Endothelial cell of umbilical vein (primary cell): ENCODE measurements at regions of chr5 and their contacts with region 1.

Region 1: DNA sequence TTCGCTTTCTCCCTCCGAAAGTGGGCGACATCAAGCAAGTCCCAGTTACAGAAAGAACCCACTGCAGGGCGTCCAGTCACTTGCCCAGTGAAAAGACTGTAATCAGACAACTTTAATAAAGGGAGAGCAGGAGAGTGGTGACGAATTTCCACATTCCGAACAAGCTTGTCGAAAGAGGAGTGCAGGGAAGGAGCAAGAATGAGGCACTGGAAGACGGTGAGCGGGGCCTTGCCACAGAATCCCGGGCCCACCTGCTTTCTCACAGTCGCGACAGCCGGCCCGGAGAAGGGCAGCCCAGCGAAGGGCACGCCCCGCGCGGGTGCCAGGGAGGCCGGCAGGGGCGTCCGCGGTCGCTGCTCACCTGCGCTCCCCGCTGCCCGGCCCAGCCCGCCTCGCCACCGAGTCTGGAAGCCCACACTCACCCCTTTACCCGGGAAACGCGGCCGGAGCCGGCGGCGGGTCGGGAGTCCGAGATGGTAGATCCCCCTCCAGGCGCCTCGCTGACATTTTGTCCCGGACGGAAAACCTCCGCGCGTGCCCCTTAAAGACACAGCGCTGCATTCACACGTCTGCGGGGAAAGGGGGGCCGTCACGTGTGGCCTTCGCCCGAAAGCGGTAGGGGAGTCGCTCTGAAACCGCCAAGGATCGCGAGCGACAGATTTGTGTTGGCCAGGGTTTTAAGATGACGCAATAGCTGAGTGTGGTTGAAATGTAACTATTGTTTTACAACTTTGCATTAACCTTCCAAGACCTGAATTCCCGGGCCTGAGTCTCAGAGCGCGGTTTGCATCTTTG is at the start of gene ZBED3:
- DNase-seq: peak; percentile 83
- H3K4me3 ChIP-seq: peak within 1 kb of the TSS; percentile 58 to 86 (median 76)
- H3K27ac ChIP-seq: peak within 1 kb of the TSS; percentile 82
- H3K4me1 ChIP-seq: peaks cover 16% of the 10 kb centered on the region
- H3K27me3 ChIP-seq: no peaks in the 10 kb centered on the region
- CTCF ChIP-seq: peak in 1 of 2 donors; percentile 16
- POLR2A ChIP-seq: peak; percentile 43
- total RNA-seq, gene ZBED3: 11.8 and 16.0 TPM in 2 replicates

Region 2: DNA sequence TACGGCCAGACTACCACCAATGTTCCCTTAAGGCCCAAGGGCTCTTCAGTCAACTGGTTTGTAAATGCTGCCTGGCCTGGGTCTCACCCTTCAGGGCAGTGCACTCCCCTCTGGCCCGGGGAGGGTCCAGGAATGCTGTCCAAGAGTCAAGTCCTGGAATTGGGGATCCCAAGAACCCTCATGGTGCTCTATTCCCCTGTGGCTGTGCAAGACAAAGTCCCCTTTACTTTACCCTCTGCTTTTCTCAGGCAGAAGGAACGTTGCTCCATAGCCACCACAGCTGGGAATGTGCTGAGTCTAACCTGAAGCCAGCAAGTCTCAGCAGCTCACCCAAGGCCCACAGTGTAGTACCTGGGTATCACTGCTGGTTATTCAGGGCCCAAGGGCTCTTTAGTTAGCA is 185.4 kb before region 1 on chr5:
- CTCF ChIA-PET with region 1: no interaction called
- POLR2A ChIA-PET with region 1: no interaction called
- dilution Hi-C with region 1: no loop called
- intact Hi-C with region 1: no loop called
- DNase-seq: no peak
- H3K4me3 ChIP-seq: no peak overlapping the region
- H3K27ac ChIP-seq: no peak overlapping the region
- H3K4me1 ChIP-seq: no peaks in the 10 kb centered on the region
- H3K27me3 ChIP-seq: no peaks in the 10 kb centered on the region
- CTCF ChIP-seq: no peak
- POLR2A ChIP-seq: no peak

Region 3: GRCh38 chr5:76958991-76959767 is 127.7 kb before region 1 on chr5:
- CTCF ChIA-PET with region 1: no interaction called
- POLR2A ChIA-PET with region 1: no interaction called
- dilution Hi-C with region 1: no loop called
- intact Hi-C with region 1: loop called (anchors 5 kb)
- DNase-seq: peak; percentile 83
- H3K4me3 ChIP-seq: peak overlapping the region in 1 of 3 experiments; percentile 26
- H3K27ac ChIP-seq: peak overlapping the region; percentile 9
- H3K4me1 ChIP-seq: peaks cover 15% of the 10 kb centered on the region
- H3K27me3 ChIP-seq: peaks cover 12 to 13% of the 10 kb centered on the region in 2 experiments
- CTCF ChIP-seq: no peak
- POLR2A ChIP-seq: no peak

Region 4: DNA sequence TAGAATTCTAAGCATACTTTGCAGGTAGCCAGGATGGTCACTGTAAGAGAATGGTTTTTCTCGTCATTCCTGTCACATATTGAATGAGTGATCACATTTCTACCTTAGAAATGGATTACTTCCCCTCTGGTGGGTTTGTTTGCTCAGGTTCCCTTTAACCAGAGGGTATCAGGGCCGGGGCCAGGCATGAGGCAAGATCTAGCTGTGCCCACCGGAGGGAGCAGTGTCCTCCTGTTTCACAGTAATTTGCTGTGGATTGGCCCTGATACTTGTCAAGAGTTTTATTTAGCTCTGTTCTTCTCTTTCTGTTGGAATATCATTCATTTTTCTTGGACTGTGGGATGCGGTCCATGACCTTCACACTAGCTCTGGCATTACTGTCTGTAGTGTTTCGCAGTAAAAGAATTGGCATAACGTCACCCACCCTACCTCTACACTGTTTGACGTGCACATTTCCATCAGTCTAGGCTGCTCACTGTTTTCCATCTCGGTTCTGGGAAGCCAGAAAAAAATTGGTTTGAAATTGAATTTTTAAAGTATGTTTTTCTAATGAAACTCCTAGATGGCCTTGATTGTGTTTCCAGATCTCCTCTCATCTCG is 42.6 kb after region 1 on chr5:
- CTCF ChIA-PET with region 1: interaction called, 3 read pairs
- POLR2A ChIA-PET with region 1: no interaction called
- dilution Hi-C with region 1: no loop called
- intact Hi-C with region 1: loop called (anchors 2 kb)
- DNase-seq: peak; percentile 17
- H3K4me3 ChIP-seq: no peak overlapping the region
- H3K27ac ChIP-seq: no peak overlapping the region
- H3K4me1 ChIP-seq: peaks cover 10% of the 10 kb centered on the region
- H3K27me3 ChIP-seq: no peaks in the 10 kb centered on the region
- CTCF ChIP-seq: peak; percentile 50 to 59
- POLR2A ChIP-seq: no peak

Region 5: DNA sequence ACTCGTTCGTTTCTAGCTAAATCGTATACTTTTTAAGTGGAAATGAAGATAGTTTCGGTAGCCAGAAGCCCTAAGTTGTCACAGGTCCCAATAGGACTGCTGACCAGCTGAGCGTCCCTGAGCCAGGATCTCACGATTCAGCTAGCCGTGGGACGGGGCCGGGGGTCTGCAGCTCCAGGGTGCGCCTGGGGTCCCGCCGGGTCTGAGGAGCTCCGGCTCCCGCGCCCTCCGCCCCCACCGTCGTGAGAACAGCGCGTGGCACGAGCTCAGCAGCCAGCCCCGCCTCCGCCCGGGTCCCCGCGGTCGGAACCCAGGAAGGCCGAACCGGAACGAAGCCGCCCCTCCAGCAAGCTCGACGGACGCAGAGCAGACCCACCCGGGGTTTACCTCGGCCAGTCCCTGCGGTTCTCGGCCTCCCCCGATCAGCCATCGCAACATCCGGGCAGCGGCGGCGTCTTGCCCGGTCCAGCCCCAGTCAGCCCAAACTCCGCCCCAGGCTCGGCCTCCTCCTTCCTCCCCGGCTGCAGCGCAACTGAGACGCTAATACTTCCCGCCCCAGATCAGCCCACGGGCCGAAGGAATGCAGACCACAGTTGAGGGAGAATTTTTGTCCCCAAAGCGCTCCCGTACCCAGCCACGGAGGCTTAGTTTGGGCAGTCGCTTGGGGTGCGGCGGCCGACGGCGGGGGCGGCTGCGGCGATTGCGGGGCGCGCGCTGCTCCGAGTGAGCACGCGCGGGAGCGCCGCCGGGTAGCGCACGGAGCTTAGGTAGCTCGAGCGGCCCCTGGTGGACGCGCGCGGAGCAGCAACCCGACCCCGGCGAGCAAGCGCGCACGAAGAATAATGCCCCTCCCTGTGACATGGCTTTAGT is 405.1 kb after region 1 on chr5 and contains the start of gene WDR41:
- CTCF ChIA-PET with region 1: interaction called, 3 read pairs
- POLR2A ChIA-PET with region 1: no interaction called
- dilution Hi-C with region 1: no loop called
- intact Hi-C with region 1: loop called (anchors 2 kb)
- DNase-seq: peak; percentile 96
- H3K4me3 ChIP-seq: peak within 1 kb of the TSS; percentile 89 to 94 (median 90)
- H3K27ac ChIP-seq: peak within 1 kb of the TSS; percentile 79
- H3K4me1 ChIP-seq: peaks cover 9% of the 10 kb centered on the region
- H3K27me3 ChIP-seq: peaks cover 12 to 25% of the 10 kb centered on the region in 2 experiments
- CTCF ChIP-seq: peak; percentile 93 to 94
- POLR2A ChIP-seq: peak; percentile 54
- total RNA-seq, gene WDR41: 23.9 and 33.6 TPM in 2 replicates